ENCODE measurements at regions of chr16 and their contacts with region 1.

Region 1: GRCh38 chr16:23556881-23557778 is at the starts of genes EARS2 and UBFD1:
- DNase-seq: peak; percentile 98
- ATAC-seq: peak; percentile 96
- H3K4me3 ChIP-seq: peak within 1 kb of the TSS; percentile 67
- H3K27ac ChIP-seq: peak within 1 kb of the TSS; percentile 80
- H3K4me1 ChIP-seq: no peaks in the 10 kb centered on the region
- H3K27me3 ChIP-seq: no peaks in the 10 kb centered on the region
- CTCF ChIP-seq: peak; percentile 98
- POLR2A ChIP-seq: peak; percentile 94
- RAD21 ChIP-seq: peak; percentile 43
- total RNA-seq, gene EARS2: 23.3 and 28.1 TPM in 2 replicates
- total RNA-seq, gene UBFD1: 39.3 and 48.9 TPM in 2 replicates

Region 2: DNA sequence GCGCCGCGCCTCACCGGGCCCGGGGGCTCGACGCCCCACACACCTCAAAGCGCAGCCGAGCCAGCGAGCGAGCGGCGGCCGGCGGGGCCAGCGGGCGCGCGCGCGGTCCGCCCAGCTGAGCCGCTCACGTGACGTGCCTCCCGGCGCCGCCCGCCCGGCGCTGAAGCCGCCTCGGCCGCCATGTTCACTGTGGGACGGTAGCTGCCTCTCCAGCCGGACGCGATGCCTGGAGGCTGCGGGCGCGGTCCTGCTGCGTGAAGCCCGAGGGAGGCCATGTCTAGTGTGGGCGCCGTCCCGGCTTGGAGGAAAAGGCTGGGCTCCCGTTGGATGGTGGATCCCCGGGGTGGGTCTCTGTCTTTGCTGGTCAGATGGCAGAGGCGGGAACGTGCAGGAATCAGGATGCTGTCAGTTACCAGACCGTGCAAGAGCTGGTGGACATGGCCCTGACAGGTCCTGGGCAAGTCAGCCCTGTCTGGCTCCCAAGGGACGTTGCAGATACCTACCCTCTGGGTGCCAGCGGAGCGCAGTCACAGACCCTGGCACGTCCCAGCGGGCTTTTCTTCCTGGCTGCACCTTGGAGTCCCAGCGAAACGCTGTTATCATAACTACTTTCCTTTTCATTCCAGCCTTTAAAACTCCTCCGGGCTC is 407.7 kb before region 1 on chr16 and contains the start of gene USP31:
- CTCF ChIA-PET with region 1: no interaction called
- POLR2A ChIA-PET with region 1: no interaction called
- dilution Hi-C with region 1: no loop called
- in situ Hi-C with region 1: no loop called
- intact Hi-C with region 1: no loop called
- DNase-seq: peak; percentile 93
- ATAC-seq: peak; percentile 99
- H3K4me3 ChIP-seq: peak within 1 kb of the TSS; percentile 92
- H3K27ac ChIP-seq: peak within 1 kb of the TSS; percentile 18; the same call in 1 of the 2 replicates
- H3K4me1 ChIP-seq: peaks cover 5% of the 10 kb centered on the region; the same call in 1 of the 2 replicates
- H3K27me3 ChIP-seq: no peaks in the 10 kb centered on the region; the same call in 1 of the 2 replicates
- CTCF ChIP-seq: no peak
- POLR2A ChIP-seq: no peak
- RAD21 ChIP-seq: no peak
- total RNA-seq, gene USP31: 3.4 and 3.9 TPM in 2 replicates

Region 3: DNA sequence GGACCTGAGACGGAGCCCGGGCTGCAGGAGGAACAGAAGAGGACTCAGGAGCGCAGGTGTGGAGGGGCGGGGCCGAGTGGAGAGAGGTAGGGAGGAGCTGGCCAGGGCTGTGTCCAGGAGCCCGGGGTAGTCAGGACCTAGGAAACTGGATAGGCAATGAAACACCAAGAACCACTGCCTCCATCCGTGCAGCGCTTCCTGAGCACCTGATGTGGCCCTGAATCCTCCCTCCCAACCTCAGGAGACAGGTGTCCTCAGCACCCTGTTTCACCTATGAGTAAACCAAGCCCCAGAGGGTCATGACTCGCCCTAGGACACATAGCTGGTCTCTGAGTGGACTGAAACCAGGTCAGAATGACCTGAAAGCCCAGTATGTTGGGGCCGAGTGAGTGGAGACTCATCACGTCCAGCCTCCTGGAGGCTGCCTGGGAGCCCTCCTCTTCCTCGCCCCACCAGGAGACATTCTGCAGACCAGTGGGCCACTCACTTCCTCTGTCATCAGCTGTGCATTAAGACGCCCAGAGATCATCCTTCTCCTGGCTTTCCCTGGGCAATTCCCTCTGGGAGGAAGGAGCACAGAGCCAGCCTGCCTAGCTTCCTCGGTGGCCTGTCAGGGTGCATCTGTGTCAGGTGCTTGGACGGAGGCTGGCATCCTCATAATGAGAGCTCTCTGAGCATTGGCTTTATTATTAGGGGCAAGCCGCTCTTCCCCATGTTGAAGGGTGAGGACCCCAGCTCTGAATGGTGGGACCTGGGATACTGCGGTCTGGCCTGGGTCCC is 182.2 kb before region 1 on chr16:
- CTCF ChIA-PET with region 1: no interaction called
- POLR2A ChIA-PET with region 1: no interaction called
- dilution Hi-C with region 1: no loop called
- in situ Hi-C with region 1: no loop called
- intact Hi-C with region 1: no loop called
- DNase-seq: no peak
- ATAC-seq: no peak
- H3K4me3 ChIP-seq: no peak overlapping the region
- H3K27ac ChIP-seq: no peak overlapping the region
- H3K4me1 ChIP-seq: no peaks in the 10 kb centered on the region
- H3K27me3 ChIP-seq: peaks cover 5% of the 10 kb centered on the region; the same call in 1 of the 2 replicates
- CTCF ChIP-seq: no peak
- POLR2A ChIP-seq: no peak
- RAD21 ChIP-seq: no peak

Region 4: DNA sequence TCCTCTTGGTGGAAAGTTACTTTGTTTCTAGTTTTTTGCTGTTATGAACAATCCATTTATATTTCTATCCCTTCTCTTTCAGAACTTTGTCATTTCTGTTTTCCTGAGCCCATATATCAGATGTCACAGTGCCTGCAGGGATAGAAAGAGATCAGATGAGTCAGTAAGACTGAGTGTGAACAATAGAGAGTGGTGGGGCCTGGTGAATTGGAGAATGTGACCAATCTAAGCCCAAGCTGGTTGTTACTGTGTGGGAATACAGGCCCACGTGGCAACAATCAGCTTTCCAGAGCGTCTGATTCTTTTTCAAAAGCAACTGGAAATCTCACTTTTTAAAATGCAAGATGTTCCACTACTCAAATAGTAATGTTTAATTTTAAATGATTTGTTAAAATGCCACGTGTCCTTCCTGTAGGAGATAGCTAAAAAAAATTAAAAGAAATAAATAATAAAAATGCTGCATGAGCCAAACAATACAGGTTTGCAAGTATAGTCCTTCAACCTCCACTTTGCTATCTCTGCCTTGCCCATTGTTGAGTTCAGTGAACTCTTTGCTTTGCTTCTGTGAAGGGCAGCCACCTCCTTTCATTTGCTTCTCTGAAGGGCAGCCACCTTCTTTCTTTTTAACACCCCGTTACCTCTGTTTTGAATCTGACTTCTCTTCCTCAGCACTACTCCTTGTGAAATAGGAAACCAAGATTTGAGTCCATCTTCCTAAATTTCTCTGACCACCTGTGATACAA is 93.7 kb after region 1 on chr16:
- CTCF ChIA-PET with region 1: no interaction called
- POLR2A ChIA-PET with region 1: interaction called, 23 read pairs
- dilution Hi-C with region 1: no loop called
- in situ Hi-C with region 1: no loop called
- intact Hi-C with region 1: no loop called
- DNase-seq: peak; percentile 20
- ATAC-seq: no peak
- H3K4me3 ChIP-seq: no peak overlapping the region
- H3K27ac ChIP-seq: no peak overlapping the region
- H3K4me1 ChIP-seq: no peaks in the 10 kb centered on the region
- H3K27me3 ChIP-seq: no peaks in the 10 kb centered on the region
- CTCF ChIP-seq: no peak
- POLR2A ChIP-seq: no peak
- RAD21 ChIP-seq: no peak

Measured in IMR-90 (cell line).